Gastrocnemius medialis (tissue), 4 donors: ENCODE measurements at regions of chr2 and their contacts with region 1.

Region 1: GRCh38 chr2:62156861-62157496 is 38.9 kb upstream of the B3GNT2 start:
- DNase-seq: no peak
- ATAC-seq: no peak
- H3K4me3 ChIP-seq: no peak overlapping the region
- H3K27ac ChIP-seq: no peak overlapping the region
- H3K4me1 ChIP-seq: peaks cover 4 to 6% of the 10 kb centered on the region in 2 donors
- H3K27me3 ChIP-seq: no peaks in the 10 kb centered on the region
- CTCF ChIP-seq: no peak
- POLR2A ChIP-seq: no peak

Region 2: DNA sequence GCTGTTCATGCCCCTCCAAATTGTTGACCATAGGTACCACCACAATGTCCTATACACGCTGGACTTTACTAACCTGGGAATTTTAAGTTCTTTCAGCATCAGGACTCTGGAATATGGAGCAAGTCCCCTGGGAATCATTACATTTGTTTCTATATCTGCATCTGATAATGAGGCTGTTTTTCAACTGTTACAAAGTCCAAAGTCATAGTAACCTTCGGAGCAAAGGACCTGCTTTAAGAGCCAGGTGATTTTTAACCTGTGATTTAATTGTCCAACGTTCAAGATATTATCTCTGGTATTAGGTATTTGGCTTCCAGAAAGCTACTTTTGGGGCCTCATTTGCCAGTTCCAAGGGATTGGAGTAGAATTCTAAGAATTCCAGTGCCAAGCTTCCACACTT is 31.4 kb after region 1 on chr2:
- in situ Hi-C with region 1: no loop called
- intact Hi-C with region 1: loop called (anchors 1 kb)
- DNase-seq: no peak
- ATAC-seq: no peak
- H3K4me3 ChIP-seq: no peak overlapping the region
- H3K27ac ChIP-seq: no peak overlapping the region
- H3K4me1 ChIP-seq: peaks cover 0 to 9% of the 10 kb centered on the region in 2 donors
- H3K27me3 ChIP-seq: no peaks in the 10 kb centered on the region
- CTCF ChIP-seq: no peak
- POLR2A ChIP-seq: no peak